K562 (cell line): ENCODE measurements at regions of chr22 and their contacts with region 1.

Region 1: DNA sequence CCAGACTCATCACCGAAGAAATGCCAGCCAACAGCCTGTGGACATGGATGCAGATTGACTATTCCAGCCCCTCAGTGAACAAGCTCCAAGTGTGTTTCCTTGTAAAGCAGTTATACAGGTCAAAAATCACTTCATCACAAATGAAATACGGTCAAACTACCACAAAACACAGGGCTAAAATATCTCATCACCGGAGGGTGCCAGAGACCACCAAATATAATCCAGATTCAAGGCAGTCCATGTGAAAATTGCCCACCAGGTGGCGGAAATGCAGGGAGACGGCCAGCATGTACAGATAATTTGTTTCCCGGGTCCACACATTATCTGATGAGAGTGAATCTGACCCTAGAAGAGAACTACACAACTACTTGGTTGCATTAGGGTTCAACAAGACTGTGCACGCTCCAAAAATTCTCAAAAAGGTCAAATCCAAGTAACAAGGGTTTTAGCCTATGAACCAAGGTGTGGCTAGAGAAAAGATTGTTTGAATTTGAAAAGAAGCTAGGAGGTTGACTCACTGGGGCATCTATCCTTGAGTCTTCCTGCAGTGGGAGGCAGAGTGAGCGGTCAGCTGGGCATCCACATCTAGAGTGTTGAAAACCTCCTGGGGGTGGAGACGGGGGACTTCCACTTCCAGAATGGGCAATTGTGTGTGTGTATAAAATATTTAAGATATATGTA is 71.7 kb downstream of the IGLL5 start:
- DNase-seq: peak; percentile 98 to 99 (median 99)
- ATAC-seq: peak; percentile 85
- H3K4me3 ChIP-seq: no peak overlapping the region
- H3K27ac ChIP-seq: no peak overlapping the region
- H3K4me1 ChIP-seq: no peaks in the 10 kb centered on the region
- H3K27me3 ChIP-seq: peaks cover 3 to 6% of the 10 kb centered on the region in 2 experiments; a peak in 3 of 5 replicates
- CTCF ChIP-seq: no peak
- EP300 ChIP-seq: no peak
- POLR2A ChIP-seq: no peak
- RAD21 ChIP-seq: no peak

Region 2: DNA sequence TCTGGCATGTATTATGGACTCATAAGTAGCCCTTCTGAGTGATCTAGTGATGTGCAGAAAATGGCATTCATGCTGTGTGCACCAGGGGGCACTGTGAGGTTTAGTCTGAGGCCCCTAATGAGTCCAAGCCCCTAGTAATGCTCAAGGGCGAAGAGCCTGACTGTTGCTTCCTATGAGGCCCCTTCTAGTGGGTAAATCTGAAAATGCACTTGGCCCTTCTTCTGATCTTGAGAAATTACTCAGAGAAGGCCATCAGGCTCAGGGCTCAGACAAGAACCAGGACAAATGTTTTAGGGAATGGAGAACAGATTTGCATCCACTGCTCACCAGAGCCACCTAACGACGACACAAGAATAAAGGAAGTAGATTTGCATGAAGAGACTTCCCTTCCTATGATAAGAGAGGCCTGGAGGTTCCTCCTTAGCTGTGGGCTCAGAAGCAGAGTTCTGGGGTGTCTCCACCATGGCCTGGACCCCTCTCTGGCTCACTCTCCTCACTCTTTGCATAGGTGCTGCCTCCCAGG is 239.0 kb before region 1 on chr22:
- CTCF ChIA-PET with region 1: interaction called, 3 read pairs
- POLR2A ChIA-PET with region 1: no interaction called
- in situ Hi-C with region 1: no loop called
- intact Hi-C with region 1: loop called (anchors 5 kb)
- DNase-seq: peak; percentile 93 to 96 (median 94)
- ATAC-seq: peak; percentile 97
- H3K4me3 ChIP-seq: no peak overlapping the region
- H3K27ac ChIP-seq: no peak overlapping the region
- H3K4me1 ChIP-seq: peaks cover 0 to 25% of the 10 kb centered on the region in 2 experiments; a peak in 3 of 5 replicates
- H3K27me3 ChIP-seq: peaks cover 0 to 12% of the 10 kb centered on the region in 2 experiments; a peak in 2 of 5 replicates
- CTCF ChIP-seq: no peak
- EP300 ChIP-seq: no peak
- POLR2A ChIP-seq: no peak
- RAD21 ChIP-seq: no peak

Region 3: DNA sequence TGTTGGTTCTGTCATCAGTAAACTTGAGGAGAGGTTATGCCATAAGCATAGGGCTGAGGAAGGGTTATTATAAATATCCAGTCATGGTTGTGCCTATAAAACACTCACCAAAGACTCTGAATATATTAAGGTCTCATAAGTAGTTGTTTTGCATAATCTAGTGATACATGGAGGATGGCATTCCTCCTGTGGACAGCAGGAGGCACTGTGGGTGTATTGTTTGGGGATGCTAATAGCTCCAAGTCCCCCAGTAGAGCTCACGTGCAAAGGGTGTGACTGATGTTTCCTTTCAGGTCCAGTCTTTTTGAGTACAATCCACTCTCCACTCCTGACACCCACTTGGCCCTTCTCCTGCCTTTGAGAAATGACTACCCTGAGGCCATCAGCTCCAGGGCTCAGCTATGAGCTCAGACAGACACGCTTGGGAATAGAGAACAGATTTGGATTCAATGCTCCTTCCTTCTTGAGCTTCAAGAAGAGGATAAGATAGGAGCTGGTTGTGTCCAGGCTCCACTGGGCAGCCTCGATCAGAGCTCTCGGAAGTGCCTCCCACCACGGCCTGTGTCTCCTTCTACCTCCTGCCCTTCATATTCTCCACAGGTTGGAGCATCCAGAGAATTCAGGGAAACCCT is 156.8 kb before region 1 on chr22:
- CTCF ChIA-PET with region 1: interaction called, 118 read pairs
- POLR2A ChIA-PET with region 1: interaction called, 3 read pairs
- in situ Hi-C with region 1: no loop called
- intact Hi-C with region 1: no loop called
- DNase-seq: peak; percentile 84 to 94 (median 91)
- ATAC-seq: peak; percentile 90
- H3K4me3 ChIP-seq: no peak overlapping the region
- H3K27ac ChIP-seq: no peak overlapping the region
- H3K4me1 ChIP-seq: no peaks in the 10 kb centered on the region
- H3K27me3 ChIP-seq: peaks cover 8 to 37% of the 10 kb centered on the region in 2 experiments; a peak in 3 of 5 replicates
- CTCF ChIP-seq: no peak
- EP300 ChIP-seq: no peak
- POLR2A ChIP-seq: no peak
- RAD21 ChIP-seq: no peak

Region 4: DNA sequence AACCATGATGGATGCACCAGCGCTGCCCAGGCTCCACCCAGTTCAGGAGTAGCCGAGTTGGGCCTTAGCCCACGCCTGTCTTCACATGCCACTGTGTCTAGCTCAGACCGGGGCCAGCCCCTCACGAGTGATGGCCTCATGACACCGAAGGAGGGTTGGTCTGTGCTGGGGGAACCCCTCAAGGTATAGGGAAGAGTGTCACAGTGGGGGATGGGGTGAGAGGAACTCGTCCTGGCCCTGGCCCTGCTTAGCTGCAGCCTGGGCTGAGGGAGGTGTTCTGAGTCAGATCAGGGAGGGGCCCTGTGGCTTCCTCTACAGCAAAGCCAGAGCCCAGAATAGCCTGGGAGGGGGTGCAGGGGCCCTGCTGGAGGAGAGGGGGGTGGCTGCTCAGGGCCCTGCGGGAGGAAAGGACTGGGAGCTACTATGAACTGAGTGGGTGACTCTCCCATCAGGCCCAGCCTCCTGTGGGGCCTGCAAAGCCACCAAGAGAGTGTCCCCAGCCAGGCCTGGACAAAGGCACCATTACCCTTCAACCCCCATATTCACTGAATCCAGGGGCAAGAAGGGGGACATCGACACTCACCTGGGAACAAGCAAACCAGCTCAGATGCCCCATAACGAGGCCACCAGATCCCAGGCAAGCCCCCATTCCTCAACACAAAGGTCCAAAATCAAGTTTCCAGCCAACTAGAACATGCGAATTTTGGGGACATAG is 30.5 kb before region 1 on chr22:
- CTCF ChIA-PET with region 1: interaction called, 3 read pairs
- POLR2A ChIA-PET with region 1: interaction called, 14 read pairs
- in situ Hi-C with region 1: no loop called
- intact Hi-C with region 1: no loop called
- DNase-seq: peak in 3 of 4 experiments; percentile 58 to 89 (median 67)
- ATAC-seq: peak; percentile 61
- H3K4me3 ChIP-seq: no peak overlapping the region
- H3K27ac ChIP-seq: no peak overlapping the region; the same call in 2 of the 3 replicates
- H3K4me1 ChIP-seq: peaks cover 16 to 18% of the 10 kb centered on the region in 2 experiments
- H3K27me3 ChIP-seq: peaks cover 8 to 48% of the 10 kb centered on the region in 2 experiments; a peak in 3 of 5 replicates
- CTCF ChIP-seq: peak in 2 of 3 experiments; percentile 2 to 13; a peak in 2 of 6 replicates
- EP300 ChIP-seq: no peak; the same call in 1 of the 2 replicates
- POLR2A ChIP-seq: no peak
- RAD21 ChIP-seq: 0 out of 4 replicates have a peak, but pooled peaks of 1 of the 2 experiments have one; percentile 3

Region 5: GRCh38 chr22:23178512-23179254 is 219.4 kb after region 1 on chr22:
- CTCF ChIA-PET with region 1: interaction called, 27 read pairs
- POLR2A ChIA-PET with region 1: interaction called, 4 read pairs
- in situ Hi-C with region 1: no loop called
- intact Hi-C with region 1: loop called (anchors 1 kb)
- DNase-seq: peak; percentile 69 to 100 (median 99)
- ATAC-seq: peak; percentile 57
- H3K4me3 ChIP-seq: no peak overlapping the region
- H3K27ac ChIP-seq: no peak overlapping the region
- H3K4me1 ChIP-seq: peaks cover 63 to 72% of the 10 kb centered on the region in 2 experiments
- H3K27me3 ChIP-seq: no peaks in the 10 kb centered on the region
- CTCF ChIP-seq: no peak
- EP300 ChIP-seq: no peak
- POLR2A ChIP-seq: no peak
- RAD21 ChIP-seq: no peak

Region 6: GRCh38 chr22:23591201-23591791 is 632.0 kb after region 1 on chr22:
- CTCF ChIA-PET with region 1: no interaction called
- POLR2A ChIA-PET with region 1: no interaction called
- in situ Hi-C with region 1: loop called (anchors 25 kb)
- intact Hi-C with region 1: no loop called
- DNase-seq: peak; percentile 60 to 67 (median 62)
- ATAC-seq: peak; percentile 92
- H3K4me3 ChIP-seq: no peak overlapping the region
- H3K27ac ChIP-seq: no peak overlapping the region
- H3K4me1 ChIP-seq: no peaks in the 10 kb centered on the region; a peak in 1 of 5 replicates
- H3K27me3 ChIP-seq: no peaks in the 10 kb centered on the region
- CTCF ChIP-seq: peak; percentile 81 to 86 (median 85)
- EP300 ChIP-seq: no peak
- POLR2A ChIP-seq: no peak
- RAD21 ChIP-seq: peak in 1 of 2 experiments; percentile 81; a peak in 2 of 4 replicates